T-cell (primary cell): ENCODE measurements at regions of chr3 and their contacts with region 1.

Region 1: GRCh38 chr3:170117134-170117533 is 64.4 kb downstream of the PHC3 start:
- DNase-seq: no peak
- ATAC-seq: no peak
- H3K4me3 ChIP-seq: no peak overlapping the region
- H3K4me3 Mint-ChIP-seq: no peak overlapping the region
- H3K27ac ChIP-seq: no peak overlapping the region
- H3K27ac Mint-ChIP-seq: no peak overlapping the region
- H3K4me1 ChIP-seq: no peaks in the 10 kb centered on the region
- H3K4me1 Mint-ChIP-seq: peaks cover 0 to 7% (median 0%) of the 10 kb centered on the region in 3 donors
- H3K27me3 ChIP-seq: no peaks in the 10 kb centered on the region
- H3K27me3 Mint-ChIP-seq: no peaks in the 10 kb centered on the region

Region 2: DNA sequence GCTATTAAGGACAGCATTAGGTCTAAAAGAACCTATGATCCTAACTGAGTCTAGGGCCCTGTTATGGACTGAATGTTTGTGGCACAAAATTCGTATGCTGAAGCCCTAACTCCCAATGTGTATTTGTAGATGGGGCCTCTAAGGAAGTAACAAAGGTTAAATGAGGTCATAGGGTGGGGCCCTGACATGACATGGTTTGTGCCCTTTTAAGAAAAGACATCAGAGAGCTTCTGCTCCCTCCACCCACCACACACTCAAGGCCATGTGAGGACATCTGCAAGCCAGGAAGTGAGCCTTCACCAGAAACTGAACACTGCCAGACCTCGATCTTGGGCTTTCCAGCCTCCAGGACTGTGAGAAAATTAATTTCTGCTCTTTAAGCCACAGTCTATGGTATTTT is 15.2 kb after region 1 on chr3:
- CTCF ChIA-PET with region 1: interaction called, 3 to 10 read pairs
- POLR2A ChIA-PET with region 1: interaction called in 1 of 2 experiments, 4 read pairs
- DNase-seq: peak in 1 of 35 experiments; percentile 11
- ATAC-seq: no peak
- H3K4me3 ChIP-seq: no peak overlapping the region
- H3K4me3 Mint-ChIP-seq: no peak overlapping the region
- H3K27ac ChIP-seq: no peak overlapping the region
- H3K27ac Mint-ChIP-seq: no peak overlapping the region
- H3K4me1 ChIP-seq: peaks cover 2 to 12% of the 10 kb centered on the region in 2 experiments
- H3K4me1 Mint-ChIP-seq: peaks cover 32 to 62% (median 49%) of the 10 kb centered on the region in 3 donors
- H3K27me3 ChIP-seq: no peaks in the 10 kb centered on the region
- H3K27me3 Mint-ChIP-seq: no peaks in the 10 kb centered on the region

Region 3: DNA sequence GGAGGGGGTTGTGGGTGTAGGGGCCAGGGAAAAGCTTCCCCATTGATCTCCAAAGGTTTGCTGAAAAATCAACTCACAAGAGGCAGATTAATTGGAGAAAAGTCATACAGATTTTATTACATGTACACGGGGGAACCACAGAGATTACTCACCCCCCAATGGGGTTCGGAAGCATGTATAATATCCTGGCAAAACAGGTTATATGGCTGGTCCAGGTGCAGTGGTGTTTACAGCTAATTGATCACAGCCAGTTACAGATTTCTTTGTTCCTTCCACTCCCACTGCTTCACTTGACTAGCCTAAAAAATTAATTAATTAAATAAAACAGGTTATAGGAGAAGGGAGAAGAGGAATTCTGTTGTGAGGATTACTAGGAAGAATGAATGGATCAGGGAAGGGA is 127.4 kb after region 1 on chr3:
- CTCF ChIA-PET with region 1: no interaction called
- POLR2A ChIA-PET with region 1: no interaction called
- DNase-seq: no peak
- ATAC-seq: no peak
- H3K4me3 ChIP-seq: no peak overlapping the region
- H3K4me3 Mint-ChIP-seq: no peak overlapping the region
- H3K27ac ChIP-seq: no peak overlapping the region
- H3K27ac Mint-ChIP-seq: no peak overlapping the region
- H3K4me1 ChIP-seq: no peaks in the 10 kb centered on the region
- H3K4me1 Mint-ChIP-seq: peaks cover 0 to 4% (median 3%) of the 10 kb centered on the region in 3 donors
- H3K27me3 ChIP-seq: no peaks in the 10 kb centered on the region
- H3K27me3 Mint-ChIP-seq: no peaks in the 10 kb centered on the region